Heart right ventricle (tissue), 16 donors: ENCODE measurements at regions of chr2 and their contacts with region 1.

Region 1: GRCh38 chr2:40665485-40666232 is 213.8 kb upstream of the SLC8A1 start:
- DNase-seq: no peak
- ATAC-seq: no peak
- H3K4me3 ChIP-seq: no peak overlapping the region
- H3K27ac ChIP-seq: no peak overlapping the region
- H3K4me1 ChIP-seq: peaks cover 0 to 10% (median 0%) of the 10 kb centered on the region in 9 donors
- H3K27me3 ChIP-seq: no peaks in the 10 kb centered on the region
- CTCF ChIP-seq: no peak

Region 2: GRCh38 chr2:40546439-40547191 is 119.0 kb before region 1 on chr2:
- intact Hi-C with region 1: no loop called
- DNase-seq: no peak
- ATAC-seq: no peak
- H3K4me3 ChIP-seq: no peak overlapping the region
- H3K27ac ChIP-seq: no peak overlapping the region
- H3K4me1 ChIP-seq: peaks cover 0 to 7% (median 0%) of the 10 kb centered on the region in 9 donors
- H3K27me3 ChIP-seq: no peaks in the 10 kb centered on the region
- CTCF ChIP-seq: no peak

Region 3: GRCh38 chr2:40592218-40592617 is 73.4 kb before region 1 on chr2:
- intact Hi-C with region 1: no loop called
- DNase-seq: no peak
- ATAC-seq: peak in 2 of 8 donors; percentile 51 to 59
- H3K4me3 ChIP-seq: peak overlapping the region in 3 of 10 donors; percentile 6 to 14 (median 9)
- H3K27ac ChIP-seq: peak overlapping the region in 4 of 10 donors; percentile 27 to 56 (median 49)
- H3K4me1 ChIP-seq: peaks cover 0 to 15% (median 0%) of the 10 kb centered on the region in 9 donors
- H3K27me3 ChIP-seq: no peaks in the 10 kb centered on the region
- CTCF ChIP-seq: no peak

Region 4: DNA sequence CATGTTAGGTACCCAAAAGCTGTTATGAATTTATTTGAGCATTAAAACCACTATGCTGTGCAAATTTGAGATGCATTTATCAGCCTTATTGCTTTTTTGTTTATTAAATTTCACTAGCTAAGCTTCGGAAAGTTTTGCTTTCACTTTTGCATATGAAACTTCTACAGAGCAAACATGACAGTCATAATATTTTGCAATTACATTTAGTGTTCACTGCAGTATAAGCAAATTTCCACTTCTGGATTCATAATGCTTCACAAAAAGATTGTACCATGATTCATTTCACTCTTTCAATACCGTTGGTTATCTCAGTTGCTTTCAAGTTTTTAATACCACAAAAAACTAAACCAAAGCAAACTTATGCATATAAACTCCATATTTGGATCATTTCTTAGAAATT is 14.9 kb after region 1 on chr2:
- intact Hi-C with region 1: loop called in 1 of 10 experiments (anchors 2 kb)
- DNase-seq: no peak
- ATAC-seq: no peak
- H3K4me3 ChIP-seq: peak overlapping the region in 4 of 10 donors; percentile 11 to 29 (median 24)
- H3K27ac ChIP-seq: peak overlapping the region in 1 of 10 donors; percentile 37
- H3K4me1 ChIP-seq: peaks cover 0 to 4% (median 0%) of the 10 kb centered on the region in 9 donors
- H3K27me3 ChIP-seq: no peaks in the 10 kb centered on the region
- CTCF ChIP-seq: no peak